ENCODE measurements at regions of chr14 and their contacts with region 1.

Region 1: GRCh38 chr14:20454516-20455354 is at the starts of genes APEX1 and OSGEP:
- DNase-seq: peak; percentile 96 to 100 (median 97)
- ATAC-seq: peak; percentile 80
- H3K4me3 ChIP-seq: peak within 1 kb of the TSS; percentile 73 to 82
- H3K4me3 Mint-ChIP-seq: no peak within 1 kb of the TSS
- H3K27ac ChIP-seq: peak within 1 kb of the TSS; percentile 89 to 96
- H3K27ac Mint-ChIP-seq: no peak within 1 kb of the TSS
- H3K4me1 ChIP-seq: peaks cover 32% of the 10 kb centered on the region
- H3K4me1 Mint-ChIP-seq: peaks cover 22% of the 10 kb centered on the region
- H3K27me3 ChIP-seq: no peaks in the 10 kb centered on the region
- H3K27me3 Mint-ChIP-seq: no peaks in the 10 kb centered on the region
- CTCF ChIP-seq: no peak
- total RNA-seq, gene APEX1: 120 to 123 TPM
- total RNA-seq, gene OSGEP: 40.7 to 47.4 TPM

Region 2: GRCh38 chr14:20332788-20333493 is 121.8 kb before region 1 on chr14 and contains the start of gene CCNB1IP1:
- CTCF ChIA-PET with region 1: no interaction called
- POLR2A ChIA-PET with region 1: no interaction called
- intact Hi-C with region 1: loop called in 1 of 2 experiments (anchors 2 kb)
- DNase-seq: peak in 8 of 9 experiments; percentile 20 to 91 (median 50)
- ATAC-seq: peak; percentile 98
- H3K4me3 ChIP-seq: peak within 1 kb of the TSS; percentile 56 to 72
- H3K4me3 Mint-ChIP-seq: peak within 1 kb of the TSS; percentile 93
- H3K27ac ChIP-seq: peak within 1 kb of the TSS; percentile 49 to 73
- H3K27ac Mint-ChIP-seq: peak within 1 kb of the TSS; percentile 88
- H3K4me1 ChIP-seq: peaks cover 7% of the 10 kb centered on the region
- H3K4me1 Mint-ChIP-seq: peaks cover 30% of the 10 kb centered on the region
- H3K27me3 ChIP-seq: no peaks in the 10 kb centered on the region
- H3K27me3 Mint-ChIP-seq: no peaks in the 10 kb centered on the region
- CTCF ChIP-seq: no peak
- total RNA-seq, gene CCNB1IP1: 26.9 to 28.0 TPM

Region 3: DNA sequence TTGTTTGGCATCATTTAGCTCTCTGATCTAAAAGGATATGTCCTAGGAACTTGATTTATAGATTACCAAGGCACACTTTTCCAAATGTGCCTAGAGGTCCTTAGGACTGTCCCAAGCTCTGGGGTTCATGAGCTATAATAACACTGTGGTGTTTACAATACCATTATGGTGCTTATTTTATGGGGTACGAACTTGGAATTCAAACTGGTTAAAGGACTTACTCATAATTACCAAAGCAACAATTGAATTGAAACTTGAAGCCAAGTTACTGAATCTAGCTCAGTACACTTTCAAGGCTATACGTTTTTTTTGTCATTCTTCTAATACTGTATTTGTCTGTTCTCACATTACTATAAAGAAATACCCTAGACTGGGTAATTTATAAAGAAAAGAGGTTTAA is 31.8 kb before region 1 on chr14:
- CTCF ChIA-PET with region 1: no interaction called
- POLR2A ChIA-PET with region 1: no interaction called
- intact Hi-C with region 1: no loop called
- DNase-seq: no peak
- ATAC-seq: no peak
- H3K4me3 ChIP-seq: no peak overlapping the region
- H3K4me3 Mint-ChIP-seq: no peak overlapping the region
- H3K27ac ChIP-seq: no peak overlapping the region
- H3K27ac Mint-ChIP-seq: no peak overlapping the region
- H3K4me1 ChIP-seq: peaks cover 9% of the 10 kb centered on the region
- H3K4me1 Mint-ChIP-seq: peaks cover 17% of the 10 kb centered on the region
- H3K27me3 ChIP-seq: no peaks in the 10 kb centered on the region
- H3K27me3 Mint-ChIP-seq: no peaks in the 10 kb centered on the region
- CTCF ChIP-seq: no peak

Region 4: GRCh38 chr14:20440882-20441281 is 13.9 kb before region 1 on chr14:
- CTCF ChIA-PET with region 1: interaction called, 3 read pairs
- POLR2A ChIA-PET with region 1: interaction called, 5 read pairs
- intact Hi-C with region 1: loop called in 1 of 2 experiments (anchors 2 kb)
- DNase-seq: peak in 8 of 9 experiments; percentile 10 to 65 (median 39)
- ATAC-seq: peak; percentile 99
- H3K4me3 ChIP-seq: peak overlapping the region in 1 of 2 experiments; percentile 54
- H3K4me3 Mint-ChIP-seq: peak overlapping the region; percentile 73
- H3K27ac ChIP-seq: peak overlapping the region; percentile 51 to 54
- H3K27ac Mint-ChIP-seq: peak overlapping the region; percentile 90
- H3K4me1 ChIP-seq: peaks cover 23% of the 10 kb centered on the region
- H3K4me1 Mint-ChIP-seq: peaks cover 25% of the 10 kb centered on the region
- H3K27me3 ChIP-seq: no peaks in the 10 kb centered on the region
- H3K27me3 Mint-ChIP-seq: no peaks in the 10 kb centered on the region
- CTCF ChIP-seq: no peak

Region 5: DNA sequence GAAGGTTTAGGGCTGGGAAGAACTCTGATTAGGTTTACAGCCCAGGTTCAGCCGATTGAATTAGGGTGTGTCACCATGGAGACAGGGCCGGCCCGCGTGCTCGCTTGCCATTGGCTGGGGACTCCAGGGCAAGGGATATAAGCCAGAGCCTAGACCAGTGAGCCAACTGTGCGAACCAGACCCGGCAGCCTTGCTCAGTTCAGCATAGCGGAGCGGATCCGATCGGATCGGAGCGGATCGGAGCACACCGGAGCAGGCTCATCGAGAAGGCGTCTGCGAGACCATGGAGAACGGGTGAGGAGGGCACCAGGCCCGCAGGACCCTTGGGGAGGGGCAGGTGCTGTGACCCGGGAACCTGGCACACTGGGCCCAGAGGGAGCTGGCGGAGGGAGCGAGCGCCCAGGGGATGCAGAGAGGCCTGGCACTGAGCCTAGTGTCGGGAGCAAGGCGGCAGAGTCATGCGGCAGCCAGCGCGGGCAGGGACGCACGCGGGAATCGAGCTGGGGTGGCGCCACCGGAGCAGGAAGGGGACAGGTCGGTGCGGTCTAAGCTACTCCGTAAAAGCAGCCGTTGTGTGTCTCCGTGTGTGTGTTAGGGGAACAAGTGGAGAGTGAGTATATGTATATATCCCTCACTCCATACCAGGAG is 14.6 kb after region 1 on chr14 and contains the start of gene PNP:
- CTCF ChIA-PET with region 1: interaction called, 4 read pairs
- POLR2A ChIA-PET with region 1: interaction called, 26 read pairs
- intact Hi-C with region 1: loop called in 1 of 2 experiments (anchors 2 kb)
- DNase-seq: peak; percentile 74 to 93 (median 86)
- ATAC-seq: peak; percentile 85
- H3K4me3 ChIP-seq: peak within 1 kb of the TSS; percentile 91 to 93
- H3K4me3 Mint-ChIP-seq: peak within 1 kb of the TSS; percentile 98
- H3K27ac ChIP-seq: peak within 1 kb of the TSS; percentile 74 to 88
- H3K27ac Mint-ChIP-seq: peak within 1 kb of the TSS; percentile 97
- H3K4me1 ChIP-seq: peaks cover 35% of the 10 kb centered on the region
- H3K4me1 Mint-ChIP-seq: peaks cover 51% of the 10 kb centered on the region
- H3K27me3 ChIP-seq: no peaks in the 10 kb centered on the region
- H3K27me3 Mint-ChIP-seq: no peaks in the 10 kb centered on the region
- CTCF ChIP-seq: no peak
- total RNA-seq, gene PNP: 59.6 to 62.1 TPM

Region 6: DNA sequence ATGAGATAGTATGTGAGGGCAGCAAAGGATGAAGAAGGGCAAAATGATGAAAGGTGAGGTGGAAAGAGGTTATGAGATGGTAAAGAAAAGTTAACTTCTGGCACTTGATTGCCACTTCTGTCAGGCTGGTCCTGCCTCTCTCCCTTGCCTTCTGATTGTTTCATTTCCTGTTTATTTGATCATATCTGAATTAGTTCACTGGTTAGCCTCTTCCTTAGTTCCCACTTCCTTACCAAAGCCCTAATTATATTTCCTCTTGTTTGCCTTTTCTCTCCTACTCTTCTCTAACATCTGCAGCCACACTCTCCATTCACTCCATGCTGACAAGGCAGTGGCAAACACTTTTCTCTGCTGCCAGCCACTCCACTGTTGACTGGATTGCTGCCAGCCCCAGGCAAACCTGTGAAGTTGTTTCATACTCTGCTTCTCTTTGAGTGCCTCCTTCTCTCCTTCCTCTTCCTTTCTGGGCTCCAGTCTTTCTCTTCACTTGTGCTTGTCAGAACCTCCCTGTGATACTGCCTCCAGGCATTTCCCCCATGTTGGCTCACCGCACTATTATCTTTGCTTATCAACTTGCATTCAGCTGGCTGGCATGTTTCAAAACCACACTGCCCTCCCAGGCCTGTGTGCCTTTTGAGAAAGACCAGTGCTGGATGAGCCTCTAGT is 22.6 kb after region 1 on chr14:
- CTCF ChIA-PET with region 1: interaction called, 4 read pairs
- POLR2A ChIA-PET with region 1: interaction called, 5 read pairs
- intact Hi-C with region 1: loop called in 1 of 2 experiments (anchors 1 kb)
- DNase-seq: peak in 8 of 9 experiments; percentile 16 to 71 (median 44)
- ATAC-seq: peak; percentile 75
- H3K4me3 ChIP-seq: peak overlapping the region in 1 of 2 experiments; percentile 1
- H3K4me3 Mint-ChIP-seq: peak overlapping the region; percentile 65
- H3K27ac ChIP-seq: peak overlapping the region; percentile 41 to 79
- H3K27ac Mint-ChIP-seq: peak overlapping the region; percentile 92
- H3K4me1 ChIP-seq: peaks cover 66% of the 10 kb centered on the region
- H3K4me1 Mint-ChIP-seq: peaks cover 86% of the 10 kb centered on the region
- H3K27me3 ChIP-seq: no peaks in the 10 kb centered on the region
- H3K27me3 Mint-ChIP-seq: no peaks in the 10 kb centered on the region
- CTCF ChIP-seq: no peak

Region 7: GRCh38 chr14:20530771-20531571 is 76.2 kb after region 1 on chr14:
- CTCF ChIA-PET with region 1: no interaction called
- POLR2A ChIA-PET with region 1: interaction called, 3 read pairs
- intact Hi-C with region 1: loop called in 1 of 2 experiments (anchors 2 kb)
- DNase-seq: peak; percentile 37 to 83 (median 72)
- ATAC-seq: peak; percentile 76
- H3K4me3 ChIP-seq: no peak overlapping the region
- H3K4me3 Mint-ChIP-seq: peak overlapping the region; percentile 48
- H3K27ac ChIP-seq: no peak overlapping the region
- H3K27ac Mint-ChIP-seq: no peak overlapping the region
- H3K4me1 ChIP-seq: no peaks in the 10 kb centered on the region
- H3K4me1 Mint-ChIP-seq: peaks cover 7% of the 10 kb centered on the region
- H3K27me3 ChIP-seq: peaks cover 0 to 2% of the 10 kb centered on the region in 2 experiments
- H3K27me3 Mint-ChIP-seq: peaks cover 8% of the 10 kb centered on the region
- CTCF ChIP-seq: peak; percentile 79

Region 8: GRCh38 chr14:20556500-20557211 is 101.9 kb after region 1 on chr14:
- CTCF ChIA-PET with region 1: no interaction called
- POLR2A ChIA-PET with region 1: no interaction called
- intact Hi-C with region 1: no loop called
- DNase-seq: no peak
- ATAC-seq: no peak
- H3K4me3 ChIP-seq: no peak overlapping the region
- H3K4me3 Mint-ChIP-seq: no peak overlapping the region
- H3K27ac ChIP-seq: no peak overlapping the region
- H3K27ac Mint-ChIP-seq: no peak overlapping the region
- H3K4me1 ChIP-seq: no peaks in the 10 kb centered on the region
- H3K4me1 Mint-ChIP-seq: no peaks in the 10 kb centered on the region
- H3K27me3 ChIP-seq: peaks cover 0 to 2% of the 10 kb centered on the region in 2 experiments
- H3K27me3 Mint-ChIP-seq: peaks cover 3% of the 10 kb centered on the region
- CTCF ChIP-seq: no peak